ENCODE measurements at regions of chr9 and their contacts with region 1.

Region 1: DNA sequence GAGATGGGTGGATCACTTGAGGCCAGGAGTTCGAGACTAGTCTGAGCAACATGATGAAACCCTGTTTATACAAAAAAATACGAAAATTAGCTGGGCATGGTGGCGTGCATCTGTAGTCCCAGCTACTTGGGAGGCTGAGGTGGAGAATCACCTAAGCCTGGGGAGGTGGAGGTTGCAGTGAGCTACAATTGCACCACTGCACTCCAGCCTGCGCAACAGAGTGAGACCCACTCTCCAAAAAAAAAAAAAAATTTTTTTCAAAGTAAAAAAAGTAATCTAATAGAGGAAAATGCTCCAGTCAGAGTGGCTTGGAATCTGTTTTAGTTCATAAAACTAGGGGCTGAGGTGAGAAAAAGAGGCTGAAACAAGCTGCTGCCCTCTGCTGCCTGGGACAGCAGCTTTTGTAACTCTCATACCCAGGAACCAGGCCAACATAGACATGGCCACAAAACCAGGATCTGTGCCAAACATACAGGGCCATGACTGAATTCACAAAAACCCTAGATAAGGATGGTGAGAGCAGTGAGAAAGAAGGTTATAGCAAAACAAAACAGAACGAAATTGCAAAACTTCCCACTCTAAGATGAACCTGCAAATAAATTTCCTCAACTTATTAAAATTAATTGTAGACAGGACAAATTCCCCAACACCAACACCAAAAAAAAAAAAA is 13.1 kb upstream of the DCAF12 start:
- DNase-seq: peak; percentile 89
- H3K4me3 Mint-ChIP-seq: no peak overlapping the region
- H3K27ac Mint-ChIP-seq: no peak overlapping the region
- H3K4me1 Mint-ChIP-seq: peaks cover 15% of the 10 kb centered on the region
- H3K27me3 Mint-ChIP-seq: no peaks in the 10 kb centered on the region
- CTCF ChIP-seq: peak; percentile 30

Region 2: GRCh38 chr9:34163458-34163857 is 23.8 kb after region 1 on chr9:
- CTCF ChIA-PET with region 1: interaction called, 8 read pairs
- POLR2A ChIA-PET with region 1: interaction called, 10 read pairs
- intact Hi-C with region 1: no loop called
- DNase-seq: peak; percentile 93
- H3K4me3 Mint-ChIP-seq: peak overlapping the region; percentile 41
- H3K27ac Mint-ChIP-seq: peak overlapping the region; percentile 36
- H3K4me1 Mint-ChIP-seq: peaks cover 23% of the 10 kb centered on the region
- H3K27me3 Mint-ChIP-seq: no peaks in the 10 kb centered on the region
- CTCF ChIP-seq: no peak

Measured in MCF 10A (cell line).